ENCODE measurements at regions of chr16 and their contacts with region 1.

Region 1: DNA sequence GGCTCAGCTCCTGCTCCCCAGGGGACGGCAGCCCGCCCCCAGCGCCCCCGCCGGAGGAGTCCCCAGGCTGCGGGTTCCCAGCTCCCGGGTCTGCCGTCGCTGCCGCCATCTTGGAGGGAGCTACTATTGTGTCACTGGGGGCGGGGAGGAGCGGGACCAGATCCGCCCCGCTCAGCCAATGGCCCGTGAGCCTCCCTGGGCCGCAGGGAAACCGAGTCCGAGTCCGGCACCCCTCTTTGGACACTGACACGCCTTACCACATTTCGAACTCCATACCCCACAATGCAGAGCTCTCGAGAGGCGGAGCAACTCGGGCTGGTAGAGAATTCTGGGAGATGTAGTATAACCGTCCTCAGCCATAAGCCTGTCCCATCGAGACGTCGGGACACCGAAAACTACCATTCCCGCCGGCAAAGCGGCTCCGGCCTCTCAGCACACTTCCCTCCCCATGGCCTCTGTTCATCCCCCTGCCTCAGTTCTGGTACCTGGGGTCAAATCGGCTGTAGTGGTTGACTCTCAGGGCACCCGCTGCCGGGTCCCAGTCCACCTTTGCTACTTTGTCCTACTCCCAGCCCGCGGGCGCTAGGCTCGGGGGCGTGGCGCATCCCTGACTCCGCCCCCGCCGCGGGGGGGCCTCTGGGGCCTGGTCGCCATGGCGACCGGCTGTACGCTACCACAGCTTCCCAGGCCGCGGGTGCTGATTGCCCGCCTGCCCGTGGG is at the starts of genes RANBP10 and TSNAXIP1:
- DNase-seq: peak; percentile 95 to 100 (median 98)

Region 2: DNA sequence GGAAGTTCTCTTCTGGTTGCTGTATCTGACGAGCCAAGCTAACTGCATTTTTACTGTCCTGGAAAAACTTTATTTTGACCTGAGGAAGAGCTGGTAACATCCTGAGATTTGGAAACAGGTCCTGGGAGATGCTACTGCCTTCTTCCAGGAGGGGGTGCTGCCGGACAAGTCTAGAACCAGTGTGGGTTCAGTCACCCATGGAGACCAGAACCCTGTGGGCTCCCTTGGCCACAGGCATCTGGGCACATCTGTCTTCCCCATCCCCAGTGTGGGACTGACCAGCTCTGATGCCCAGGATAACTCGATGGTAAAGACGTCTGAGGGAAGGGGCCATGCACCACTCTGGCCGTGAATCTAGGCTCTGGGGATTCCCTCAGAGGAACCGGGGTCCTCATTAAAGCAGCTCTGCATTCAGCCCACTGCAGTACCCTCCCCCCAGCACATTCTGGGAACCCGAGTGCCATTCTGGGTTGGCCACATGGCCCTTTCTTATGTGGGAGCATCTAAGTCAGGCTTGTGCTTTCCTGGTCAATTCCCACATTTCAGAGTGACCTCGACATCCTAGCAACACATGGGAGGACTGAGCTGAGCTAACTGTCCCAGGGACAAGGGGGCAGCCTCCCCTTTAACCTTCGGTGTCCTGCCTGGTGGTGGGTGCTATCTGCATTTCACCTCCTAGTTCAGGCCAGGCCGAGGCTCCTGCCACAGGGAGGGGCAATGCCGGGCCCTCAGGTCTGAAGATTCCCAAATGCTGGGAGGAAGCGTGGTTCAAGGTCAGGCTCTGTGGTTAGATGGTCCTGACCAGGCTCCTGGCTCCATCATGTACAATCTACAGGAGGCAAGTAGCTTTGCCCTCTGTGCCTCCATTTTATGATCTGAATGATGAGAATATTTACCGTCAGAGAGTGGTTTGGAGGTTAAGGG is 133.6 kb before region 1 on chr16:
- intact Hi-C with region 1: loop called (anchors 10 kb)
- DNase-seq: peak in 8 of 10 donors; percentile 39 to 95 (median 67)

Region 3: DNA sequence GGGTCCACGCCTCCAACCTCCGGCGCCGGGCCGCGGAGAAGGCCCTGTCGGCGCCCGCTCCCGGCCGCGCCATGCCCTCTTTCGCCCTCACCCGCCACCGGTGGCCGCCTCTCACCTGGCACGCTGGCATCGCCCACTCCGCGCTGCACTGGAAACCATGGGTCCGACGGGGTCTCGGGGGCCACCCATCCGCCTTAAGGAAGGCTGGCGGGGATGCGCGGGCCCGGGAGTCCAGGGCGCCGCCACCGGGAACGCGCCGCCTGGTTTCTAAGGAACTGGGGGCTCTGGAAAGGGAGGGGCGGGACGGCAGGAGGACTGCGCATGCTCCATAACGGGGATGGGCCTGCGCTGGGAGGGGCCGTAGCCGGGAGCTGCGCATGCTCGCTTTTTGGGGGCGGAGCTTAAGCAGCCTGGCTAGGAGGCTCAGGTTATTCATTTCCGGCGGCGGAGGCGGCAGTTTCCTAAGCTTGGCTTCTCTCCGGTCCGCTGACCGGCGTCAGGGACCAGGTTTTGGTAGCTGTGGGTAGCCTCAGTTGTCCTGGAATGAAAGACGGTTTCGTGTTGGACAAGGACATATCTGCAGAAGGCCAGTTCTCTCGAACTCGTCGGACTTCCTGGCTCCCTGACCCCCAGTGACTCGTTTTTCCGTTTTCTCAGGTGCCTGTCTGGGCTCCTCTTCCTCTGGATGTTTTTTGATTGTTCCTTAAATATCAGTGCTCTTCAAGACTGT is 87.4 kb before region 1 on chr16 and contains the start of gene GFOD2:
- intact Hi-C with region 1: loop called (anchors 2 kb)
- DNase-seq: peak; percentile 94 to 99 (median 98)

Region 4: DNA sequence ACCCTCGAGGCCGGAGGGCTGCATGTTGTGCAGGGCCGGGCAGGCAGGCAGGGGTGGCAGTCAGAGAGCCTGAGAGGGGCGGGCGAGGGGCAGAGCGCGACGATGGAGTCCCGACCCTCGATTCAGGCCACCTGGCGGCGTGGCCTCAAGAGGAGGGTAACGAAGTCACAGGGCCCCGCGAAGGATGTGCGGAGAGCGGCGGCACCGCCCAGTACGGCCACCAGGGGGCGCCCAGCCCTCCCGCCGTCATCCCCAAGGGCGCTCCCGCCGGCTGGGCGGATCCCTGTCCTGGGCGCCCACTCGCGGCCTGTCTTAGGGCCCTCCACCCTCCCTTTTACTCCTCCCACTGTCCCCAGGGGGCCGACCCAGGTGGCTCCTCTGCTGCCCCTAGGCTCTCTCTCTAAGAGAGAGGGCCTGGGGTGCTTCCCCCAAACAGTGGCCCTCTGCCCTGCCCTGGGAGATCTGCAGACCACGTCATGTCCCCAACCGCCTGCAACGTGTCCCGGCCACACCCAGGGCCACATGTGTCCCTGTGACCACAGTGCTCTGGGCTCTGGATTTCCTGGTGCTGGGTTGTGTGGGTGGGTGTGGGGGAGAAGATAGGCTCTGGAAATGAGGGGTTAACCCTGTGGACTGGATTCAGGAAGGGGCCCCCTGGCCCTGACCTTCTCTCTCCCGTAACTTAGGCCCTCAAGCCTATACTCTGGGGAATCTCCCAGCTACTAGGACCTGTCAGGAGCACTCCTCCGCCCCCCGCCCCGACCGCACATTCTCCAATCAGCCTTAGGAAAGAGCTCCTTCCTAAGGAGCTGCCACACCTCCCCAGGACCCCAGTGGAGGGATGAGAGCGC is 186.8 kb after region 1 on chr16:
- intact Hi-C with region 1: no loop called
- DNase-seq: peak; percentile 20 to 94 (median 64)

Region 5: GRCh38 chr16:68126395-68126794 is 319.8 kb after region 1 on chr16:
- intact Hi-C with region 1: no loop called
- DNase-seq: no peak